SK-N-SH (cell line): ENCODE measurements at regions of chr3 and their contacts with region 1.

Region 1: DNA sequence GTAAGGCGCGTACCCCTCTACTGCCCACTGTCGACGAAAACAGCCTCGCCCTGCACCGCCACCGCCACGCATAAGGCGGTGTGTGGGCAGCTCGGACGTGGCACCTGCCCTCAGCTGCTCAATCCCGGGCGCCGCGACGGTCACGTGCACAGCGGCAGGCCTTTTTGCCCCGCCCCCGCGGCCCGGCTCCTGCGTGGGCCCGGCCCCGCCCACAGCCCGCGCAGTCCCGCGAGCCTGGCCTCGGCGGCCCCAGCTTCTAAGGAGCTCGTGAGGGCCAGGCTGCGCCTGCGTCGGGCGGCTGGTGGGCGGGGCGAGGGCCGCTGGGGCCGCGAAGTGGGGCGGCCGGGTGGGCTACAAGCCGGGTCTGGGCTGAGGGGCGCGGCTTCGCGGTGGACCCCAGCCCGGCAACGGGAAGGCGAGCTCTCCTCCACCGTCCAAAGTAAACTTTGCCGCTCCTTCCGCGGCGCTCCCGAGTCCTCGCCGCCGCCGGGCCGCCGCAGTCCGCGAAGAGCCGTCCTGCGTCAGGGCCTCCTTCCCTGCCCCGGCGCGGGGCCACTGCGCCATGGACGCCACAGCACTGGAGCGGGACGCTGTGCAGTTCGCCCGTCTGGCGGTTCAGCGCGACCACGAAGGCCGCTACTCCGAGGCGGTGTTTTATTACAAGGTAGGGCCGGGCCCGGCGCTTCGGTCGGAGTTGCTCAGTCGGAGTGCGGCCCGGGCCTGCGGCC is at the start of gene CAPN7:
- DNase-seq: peak; percentile 98
- H3K4me3 ChIP-seq: peak within 1 kb of the TSS; percentile 87 to 92
- H3K27ac ChIP-seq: peak within 1 kb of the TSS; percentile 83 to 92
- H3K4me1 ChIP-seq: peaks cover 0 to 13% of the 10 kb centered on the region in 2 experiments; a peak in 3 of 4 replicates
- H3K27me3 ChIP-seq: no peaks in the 10 kb centered on the region
- CTCF ChIP-seq: peak; percentile 53
- EP300 ChIP-seq: no peak
- RAD21 ChIP-seq: no peak
- polyA plus RNA-seq, gene CAPN7: 7.3 and 11.1 TPM in 2 replicates

Region 2: DNA sequence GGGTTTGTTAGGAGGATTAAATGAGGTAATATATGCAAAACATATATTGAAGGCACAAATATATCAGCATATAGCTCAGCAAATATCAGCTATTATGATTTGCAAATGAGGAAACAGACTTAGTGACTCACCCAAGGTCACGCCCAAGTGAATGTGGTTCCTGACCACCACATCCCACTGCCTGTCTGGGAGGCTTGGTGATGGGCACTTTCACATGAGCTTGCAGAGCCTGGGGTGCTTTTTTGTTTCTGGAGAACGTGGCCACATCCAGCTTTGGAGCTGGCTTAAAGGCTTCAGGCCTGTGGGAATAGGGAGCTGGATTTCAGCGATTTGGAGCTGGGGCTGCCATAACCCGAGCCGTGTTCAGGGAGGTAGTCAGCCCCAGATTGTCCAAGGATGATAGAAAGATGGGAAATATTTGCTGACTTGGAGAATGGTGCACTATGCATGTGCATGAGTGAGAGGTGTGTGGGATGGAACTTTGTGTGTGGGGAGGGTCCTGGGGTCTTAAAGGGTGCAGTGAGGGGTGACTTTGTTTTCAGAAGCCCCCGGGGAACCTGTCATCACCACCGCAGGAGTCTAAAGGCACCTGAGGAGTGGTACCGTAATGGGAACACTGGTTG is 399.3 kb before region 1 on chr3:
- CTCF ChIA-PET with region 1: no interaction called
- POLR2A ChIA-PET with region 1: no interaction called
- DNase-seq: no peak
- H3K4me3 ChIP-seq: no peak overlapping the region
- H3K27ac ChIP-seq: no peak overlapping the region
- H3K4me1 ChIP-seq: peaks cover 0 to 5% of the 10 kb centered on the region in 2 experiments; a peak in 1 of 4 replicates
- H3K27me3 ChIP-seq: peaks cover 9% of the 10 kb centered on the region; the same call in 1 of the 2 replicates
- CTCF ChIP-seq: no peak
- EP300 ChIP-seq: no peak
- RAD21 ChIP-seq: no peak

Region 3: GRCh38 chr3:15120986-15121385 is 85.1 kb before region 1 on chr3:
- CTCF ChIA-PET with region 1: interaction called, 12 read pairs
- POLR2A ChIA-PET with region 1: no interaction called
- DNase-seq: no peak
- H3K4me3 ChIP-seq: no peak overlapping the region
- H3K27ac ChIP-seq: no peak overlapping the region
- H3K4me1 ChIP-seq: no peaks in the 10 kb centered on the region; a peak in 1 of 4 replicates
- H3K27me3 ChIP-seq: no peaks in the 10 kb centered on the region
- CTCF ChIP-seq: no peak
- EP300 ChIP-seq: no peak
- RAD21 ChIP-seq: no peak

Region 4: DNA sequence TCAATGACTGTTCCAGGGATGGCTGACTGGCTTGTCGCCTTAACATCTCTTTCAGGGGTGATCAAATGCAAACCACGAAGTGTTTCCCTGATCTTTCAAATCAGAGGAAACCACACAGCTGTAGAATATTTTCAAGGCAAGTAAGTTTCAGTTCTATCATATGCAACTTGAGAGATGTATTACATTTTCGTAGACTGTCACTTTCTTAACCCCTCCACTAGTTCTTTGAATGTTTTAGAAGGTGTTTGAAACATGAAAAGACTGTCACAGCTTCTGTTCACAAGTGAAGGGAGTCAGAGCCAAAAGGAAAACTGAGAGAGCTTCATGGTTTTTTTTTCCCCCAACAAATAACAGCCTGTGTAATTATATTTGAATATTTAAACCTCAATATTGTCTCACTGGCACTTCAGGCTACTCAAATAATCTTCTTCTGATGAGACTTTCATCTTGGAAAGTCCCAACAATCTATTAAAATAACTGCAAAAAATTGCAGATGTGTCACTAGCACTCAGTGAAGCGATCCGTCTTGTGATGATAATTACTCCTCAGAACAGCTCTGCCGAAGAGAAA is 26.0 kb before region 1 on chr3:
- CTCF ChIA-PET with region 1: interaction called, 20 read pairs
- POLR2A ChIA-PET with region 1: no interaction called
- DNase-seq: no peak
- H3K4me3 ChIP-seq: no peak overlapping the region
- H3K27ac ChIP-seq: no peak overlapping the region
- H3K4me1 ChIP-seq: no peaks in the 10 kb centered on the region
- H3K27me3 ChIP-seq: peaks cover 6% of the 10 kb centered on the region; the same call in 1 of the 2 replicates
- CTCF ChIP-seq: no peak
- EP300 ChIP-seq: no peak
- RAD21 ChIP-seq: no peak

Region 5: GRCh38 chr3:15217841-15218267 is 11.8 kb after region 1 on chr3:
- CTCF ChIA-PET with region 1: interaction called, 19 read pairs
- POLR2A ChIA-PET with region 1: interaction called, 7 read pairs
- DNase-seq: no peak
- H3K4me3 ChIP-seq: no peak overlapping the region
- H3K27ac ChIP-seq: no peak overlapping the region
- H3K4me1 ChIP-seq: no peaks in the 10 kb centered on the region
- H3K27me3 ChIP-seq: no peaks in the 10 kb centered on the region
- CTCF ChIP-seq: no peak
- EP300 ChIP-seq: no peak
- RAD21 ChIP-seq: no peak

Region 6: GRCh38 chr3:15405448-15406050 is 199.5 kb after region 1 on chr3:
- CTCF ChIA-PET with region 1: interaction called, 53 read pairs
- POLR2A ChIA-PET with region 1: no interaction called
- DNase-seq: peak; percentile 51
- H3K4me3 ChIP-seq: no peak overlapping the region; a peak in 1 of 4 replicates
- H3K27ac ChIP-seq: no peak overlapping the region
- H3K4me1 ChIP-seq: no peaks in the 10 kb centered on the region
- H3K27me3 ChIP-seq: no peaks in the 10 kb centered on the region
- CTCF ChIP-seq: peak; percentile 82
- EP300 ChIP-seq: no peak
- RAD21 ChIP-seq: peak; percentile 65

Region 7: GRCh38 chr3:15491143-15491542 is 285.0 kb after region 1 on chr3:
- CTCF ChIA-PET with region 1: no interaction called
- POLR2A ChIA-PET with region 1: no interaction called
- DNase-seq: no peak
- H3K4me3 ChIP-seq: no peak overlapping the region
- H3K27ac ChIP-seq: no peak overlapping the region
- H3K4me1 ChIP-seq: no peaks in the 10 kb centered on the region; a peak in 1 of 4 replicates
- H3K27me3 ChIP-seq: no peaks in the 10 kb centered on the region
- CTCF ChIP-seq: no peak
- EP300 ChIP-seq: no peak
- RAD21 ChIP-seq: no peak